ENCODE measurements at regions of chr9 and their contacts with region 1.

Region 1: GRCh38 chr9:121545875-121546423 is 46.3 kb upstream of the GGTA1 start:
- DNase-seq: peak; percentile 82 to 97
- H3K4me3 ChIP-seq: no peak overlapping the region
- H3K27ac ChIP-seq: no peak overlapping the region
- H3K4me1 ChIP-seq: peaks cover 9% of the 10 kb centered on the region
- H3K27me3 ChIP-seq: no peaks in the 10 kb centered on the region
- CTCF ChIP-seq: peak; percentile 95

Region 2: DNA sequence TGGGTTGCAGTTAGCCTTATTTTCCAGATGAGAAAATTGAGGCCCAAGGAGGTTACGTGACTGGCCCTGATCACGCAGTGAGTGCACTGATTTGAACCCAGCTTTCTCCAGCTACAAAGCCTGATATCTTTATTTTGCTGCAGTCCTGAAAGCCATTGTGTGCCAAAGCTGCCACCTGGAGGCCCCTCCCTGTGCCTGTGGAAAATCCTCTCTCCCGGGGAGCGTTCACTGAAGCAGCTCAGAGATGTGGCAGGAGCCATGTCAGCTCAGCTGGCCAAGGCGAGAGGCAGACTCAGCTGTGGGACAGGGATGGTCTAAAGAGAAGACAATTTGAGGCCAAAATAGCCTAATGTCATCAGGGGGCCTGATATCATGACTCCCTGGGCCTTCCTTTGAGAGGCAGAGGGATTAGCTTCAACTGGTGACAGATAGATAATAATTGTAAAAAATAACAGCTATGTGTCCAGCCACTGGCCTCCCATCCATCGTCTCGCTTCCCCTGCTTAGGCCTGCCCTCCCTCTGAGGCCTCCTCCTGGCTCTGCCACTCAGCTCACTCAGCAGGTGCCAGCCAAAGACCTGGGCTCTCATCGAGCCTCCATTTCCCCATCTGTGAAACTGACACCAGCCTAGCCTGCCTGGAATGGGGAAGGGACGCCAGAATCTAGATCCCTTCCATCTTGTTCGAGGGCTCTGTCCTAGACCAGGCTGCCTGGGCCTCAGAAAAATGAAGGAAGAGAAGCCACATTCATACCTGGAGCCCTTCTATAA is 28.0 kb after region 1 on chr9:
- CTCF ChIA-PET with region 1: interaction called, 4 read pairs
- POLR2A ChIA-PET with region 1: no interaction called
- intact Hi-C with region 1: loop called (anchors 1 kb)
- DNase-seq: no peak
- H3K4me3 ChIP-seq: no peak overlapping the region
- H3K27ac ChIP-seq: no peak overlapping the region
- H3K4me1 ChIP-seq: no peaks in the 10 kb centered on the region
- H3K27me3 ChIP-seq: no peaks in the 10 kb centered on the region; the same call in 1 of the 2 replicates
- CTCF ChIP-seq: no peak

Region 3: DNA sequence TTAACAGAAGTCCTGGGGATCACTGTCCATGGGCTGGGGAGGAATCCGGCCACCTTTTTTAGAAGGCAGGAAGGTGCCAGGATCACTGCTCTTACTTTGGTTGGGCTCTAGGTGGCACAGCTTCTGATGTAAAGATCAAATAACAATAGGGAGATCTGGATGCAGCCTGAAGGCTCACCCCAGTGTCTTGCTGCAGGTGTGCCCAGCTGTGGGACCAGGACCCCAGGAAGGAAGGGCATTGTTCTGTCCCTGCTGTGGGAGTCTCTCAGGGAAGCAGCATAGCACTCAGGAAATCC is 175.1 kb after region 1 on chr9:
- CTCF ChIA-PET with region 1: interaction called, 4 read pairs
- POLR2A ChIA-PET with region 1: interaction called, 4 read pairs
- intact Hi-C with region 1: loop called (anchors 1 kb)
- DNase-seq: no peak
- H3K4me3 ChIP-seq: no peak overlapping the region
- H3K27ac ChIP-seq: no peak overlapping the region
- H3K4me1 ChIP-seq: peaks cover 15% of the 10 kb centered on the region
- H3K27me3 ChIP-seq: no peaks in the 10 kb centered on the region
- CTCF ChIP-seq: peak; percentile 20; the same call in 1 of the 2 replicates

Region 4: GRCh38 chr9:121765021-121765950 is 219.3 kb after region 1 on chr9:
- CTCF ChIA-PET with region 1: no interaction called
- POLR2A ChIA-PET with region 1: no interaction called
- intact Hi-C with region 1: loop called (anchors 5 kb)
- DNase-seq: peak; percentile 88 to 94
- H3K4me3 ChIP-seq: no peak overlapping the region
- H3K27ac ChIP-seq: peak overlapping the region; percentile 80
- H3K4me1 ChIP-seq: peaks cover 18% of the 10 kb centered on the region
- H3K27me3 ChIP-seq: no peaks in the 10 kb centered on the region
- CTCF ChIP-seq: peak; percentile 57; the same call in 1 of the 2 replicates

Region 5: GRCh38 chr9:122005597-122005996 is 459.6 kb after region 1 on chr9:
- CTCF ChIA-PET with region 1: no interaction called
- POLR2A ChIA-PET with region 1: interaction called, 4 read pairs
- intact Hi-C with region 1: loop called (anchors 5 kb)
- DNase-seq: peak in 1 of 2 experiments; percentile 43
- H3K4me3 ChIP-seq: no peak overlapping the region
- H3K27ac ChIP-seq: no peak overlapping the region
- H3K4me1 ChIP-seq: no peaks in the 10 kb centered on the region
- H3K27me3 ChIP-seq: no peaks in the 10 kb centered on the region
- CTCF ChIP-seq: peak; percentile 64

Region 6: GRCh38 chr9:122125158-122125508 is 579.2 kb after region 1 on chr9:
- CTCF ChIA-PET with region 1: interaction called, 17 read pairs
- POLR2A ChIA-PET with region 1: no interaction called
- intact Hi-C with region 1: loop called (anchors 1 kb)
- DNase-seq: peak; percentile 46 to 80
- H3K4me3 ChIP-seq: no peak overlapping the region
- H3K27ac ChIP-seq: no peak overlapping the region
- H3K4me1 ChIP-seq: no peaks in the 10 kb centered on the region
- H3K27me3 ChIP-seq: no peaks in the 10 kb centered on the region
- CTCF ChIP-seq: peak; percentile 95